ENCODE measurements at regions of chr10 and their contacts with region 1.

Region 1: DNA sequence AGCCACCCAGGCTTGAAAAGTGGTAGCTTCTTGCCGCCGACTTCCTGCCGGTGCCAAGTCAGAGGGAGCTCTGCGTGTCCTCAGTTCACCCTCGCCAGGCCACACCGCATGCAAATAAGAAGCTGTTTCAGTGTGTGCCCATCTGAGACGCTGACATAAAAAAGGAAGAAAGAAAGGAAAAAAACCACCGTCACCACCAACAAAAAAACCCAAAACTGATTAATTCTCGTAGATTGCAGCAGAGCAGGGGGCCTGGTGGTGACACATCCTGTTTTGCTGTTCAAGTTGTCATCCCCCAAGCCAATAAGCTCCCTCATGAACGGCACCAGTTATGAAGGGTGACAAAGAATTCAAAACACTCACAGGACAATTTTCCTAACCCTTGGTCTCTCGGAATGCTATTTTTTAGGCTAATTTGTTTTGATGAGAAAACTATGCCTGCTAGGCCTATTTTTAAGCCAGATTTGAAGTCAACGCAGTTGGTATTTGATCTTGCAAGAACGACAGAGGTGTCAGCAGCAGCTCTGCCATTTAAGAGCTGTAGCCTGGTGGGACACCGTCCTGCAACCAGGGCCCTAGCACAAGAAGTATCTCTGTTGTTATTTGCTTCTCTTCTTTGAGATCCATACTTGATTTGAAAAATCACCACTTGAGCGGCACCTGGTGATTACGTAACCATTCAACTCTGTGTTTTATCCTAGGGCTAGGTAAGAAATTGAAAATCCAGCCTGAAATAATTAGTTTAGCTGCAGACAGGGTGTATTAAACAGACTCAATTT is 145.6 kb downstream of the PFKFB3 start:
- DNase-seq: peak; percentile 41 to 96 (median 93)
- ATAC-seq: peak; percentile 95
- H3K4me3 ChIP-seq: peak overlapping the region; percentile 54
- H3K4me3 Mint-ChIP-seq: peak overlapping the region; percentile 78 to 88 (median 82)
- H3K27ac ChIP-seq: peak overlapping the region; percentile 79
- H3K27ac Mint-ChIP-seq: peak overlapping the region; percentile 91 to 99 (median 96)
- H3K4me1 ChIP-seq: peaks cover 25 to 34% of the 10 kb centered on the region in 2 donors
- H3K4me1 Mint-ChIP-seq: peaks cover 40 to 77% (median 57%) of the 10 kb centered on the region in 7 donors
- H3K27me3 ChIP-seq: no peaks in the 10 kb centered on the region
- H3K27me3 Mint-ChIP-seq: no peaks in the 10 kb centered on the region

Region 2: GRCh38 chr10:6074489-6075301 is 273.6 kb before region 1 on chr10:
- CTCF ChIA-PET with region 1: no interaction called
- POLR2A ChIA-PET with region 1: no interaction called
- intact Hi-C with region 1: no loop called
- DNase-seq: no peak
- ATAC-seq: no peak
- H3K4me3 ChIP-seq: no peak overlapping the region
- H3K4me3 Mint-ChIP-seq: peak overlapping the region in 1 of 10 donors; percentile 36
- H3K27ac ChIP-seq: no peak overlapping the region
- H3K27ac Mint-ChIP-seq: peak overlapping the region in 3 of 9 donors; percentile 5 to 63 (median 22)
- H3K4me1 ChIP-seq: peaks cover 0 to 32% of the 10 kb centered on the region in 2 donors
- H3K4me1 Mint-ChIP-seq: peaks cover 30 to 61% (median 49%) of the 10 kb centered on the region in 7 donors
- H3K27me3 ChIP-seq: no peaks in the 10 kb centered on the region
- H3K27me3 Mint-ChIP-seq: no peaks in the 10 kb centered on the region

Region 3: GRCh38 chr10:6108603-6109443 is 239.5 kb before region 1 on chr10:
- CTCF ChIA-PET with region 1: interaction called, 3 read pairs
- POLR2A ChIA-PET with region 1: no interaction called
- intact Hi-C with region 1: loop called in 1 of 2 experiments (anchors 1 kb)
- DNase-seq: peak in 7 of 9 donors; percentile 38 to 66 (median 62)
- ATAC-seq: peak; percentile 85
- H3K4me3 ChIP-seq: no peak overlapping the region
- H3K4me3 Mint-ChIP-seq: peak overlapping the region in 3 of 10 donors; percentile 2 to 37 (median 29)
- H3K27ac ChIP-seq: no peak overlapping the region
- H3K27ac Mint-ChIP-seq: peak overlapping the region; percentile 37 to 91 (median 80)
- H3K4me1 ChIP-seq: peaks cover 10 to 11% of the 10 kb centered on the region in 2 donors
- H3K4me1 Mint-ChIP-seq: peaks cover 11 to 38% (median 23%) of the 10 kb centered on the region in 7 donors
- H3K27me3 ChIP-seq: no peaks in the 10 kb centered on the region
- H3K27me3 Mint-ChIP-seq: no peaks in the 10 kb centered on the region

Region 4: GRCh38 chr10:6171881-6172695 is 176.2 kb before region 1 on chr10:
- CTCF ChIA-PET with region 1: interaction called, 3 read pairs
- POLR2A ChIA-PET with region 1: interaction called, 5 read pairs
- intact Hi-C with region 1: loop called in 1 of 2 experiments (anchors 1 kb)
- DNase-seq: peak in 1 of 9 donors; percentile 54
- ATAC-seq: peak; percentile 75
- H3K4me3 ChIP-seq: no peak overlapping the region
- H3K4me3 Mint-ChIP-seq: peak overlapping the region in 9 of 10 donors; percentile 21 to 74 (median 43)
- H3K27ac ChIP-seq: peak overlapping the region; percentile 3
- H3K27ac Mint-ChIP-seq: peak overlapping the region; percentile 65 to 94 (median 89)
- H3K4me1 ChIP-seq: peaks cover 9 to 46% of the 10 kb centered on the region in 2 donors
- H3K4me1 Mint-ChIP-seq: peaks cover 67 to 94% (median 88%) of the 10 kb centered on the region in 7 donors
- H3K27me3 ChIP-seq: no peaks in the 10 kb centered on the region
- H3K27me3 Mint-ChIP-seq: no peaks in the 10 kb centered on the region

Region 5: GRCh38 chr10:6300106-6300783 is 48.0 kb before region 1 on chr10:
- CTCF ChIA-PET with region 1: interaction called, 3 read pairs
- POLR2A ChIA-PET with region 1: interaction called, 11 read pairs
- intact Hi-C with region 1: no loop called
- DNase-seq: peak in 7 of 9 donors; percentile 35 to 63 (median 51)
- ATAC-seq: peak; percentile 87
- H3K4me3 ChIP-seq: peak overlapping the region; percentile 15
- H3K4me3 Mint-ChIP-seq: peak overlapping the region; percentile 30 to 78 (median 60)
- H3K27ac ChIP-seq: no peak overlapping the region
- H3K27ac Mint-ChIP-seq: peak overlapping the region; percentile 58 to 95 (median 82)
- H3K4me1 ChIP-seq: peaks cover 7 to 12% of the 10 kb centered on the region in 2 donors
- H3K4me1 Mint-ChIP-seq: peaks cover 7 to 54% (median 27%) of the 10 kb centered on the region in 7 donors
- H3K27me3 ChIP-seq: no peaks in the 10 kb centered on the region
- H3K27me3 Mint-ChIP-seq: no peaks in the 10 kb centered on the region

Region 6: DNA sequence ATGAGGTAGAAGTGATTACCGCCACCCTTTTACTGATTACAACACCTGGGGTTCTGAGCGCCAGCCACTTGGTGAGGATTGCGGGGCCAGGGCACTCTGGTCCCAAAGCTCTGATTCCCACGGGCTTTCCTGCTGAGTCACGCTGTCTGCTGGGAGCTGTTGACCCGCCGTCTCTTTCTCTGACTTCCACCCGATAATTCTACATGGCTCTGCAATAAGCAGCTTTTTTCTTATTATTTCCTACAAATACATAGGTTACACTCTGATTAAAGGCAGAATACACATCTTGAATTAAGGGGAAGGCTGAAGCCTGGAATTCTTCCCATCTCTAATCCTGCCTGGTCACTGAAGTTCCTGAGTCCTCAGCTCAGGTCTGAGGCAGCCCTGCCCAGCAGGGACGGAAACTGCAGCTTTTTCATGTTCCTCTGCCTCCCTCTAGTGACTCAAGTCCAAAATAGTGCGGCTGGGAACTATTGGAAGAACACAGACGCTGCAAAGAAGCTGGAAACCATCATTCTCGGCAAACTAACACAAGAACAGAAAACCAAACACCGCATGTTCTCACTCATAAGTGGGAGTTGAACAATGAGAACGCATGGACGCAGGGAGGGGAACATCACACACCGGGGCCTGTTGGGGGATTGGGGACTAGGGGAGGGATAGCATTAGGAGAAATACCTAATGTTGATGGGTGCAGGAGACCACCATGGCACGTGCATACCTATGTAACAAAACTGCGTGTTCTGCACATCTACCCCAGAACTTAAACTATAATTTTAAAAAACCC is 53.5 kb after region 1 on chr10:
- CTCF ChIA-PET with region 1: interaction called, 35 read pairs
- POLR2A ChIA-PET with region 1: interaction called, 30 read pairs
- intact Hi-C with region 1: loop called (anchors 1 to 2 kb)
- DNase-seq: peak in 8 of 9 donors; percentile 49 to 74 (median 66)
- ATAC-seq: peak; percentile 87
- H3K4me3 ChIP-seq: no peak overlapping the region
- H3K4me3 Mint-ChIP-seq: peak overlapping the region in 9 of 10 donors; percentile 0 to 49 (median 38)
- H3K27ac ChIP-seq: no peak overlapping the region
- H3K27ac Mint-ChIP-seq: peak overlapping the region in 8 of 9 donors; percentile 4 to 82 (median 56)
- H3K4me1 ChIP-seq: peaks cover 0 to 11% of the 10 kb centered on the region in 2 donors
- H3K4me1 Mint-ChIP-seq: peaks cover 4 to 33% (median 18%) of the 10 kb centered on the region in 7 donors
- H3K27me3 ChIP-seq: no peaks in the 10 kb centered on the region
- H3K27me3 Mint-ChIP-seq: peaks cover 0 to 13% (median 0%) of the 10 kb centered on the region in 5 donors

Region 7: GRCh38 chr10:6593241-6593671 is 245.0 kb after region 1 on chr10:
- CTCF ChIA-PET with region 1: no interaction called
- POLR2A ChIA-PET with region 1: no interaction called
- intact Hi-C with region 1: loop called in 1 of 2 experiments (anchors 10 kb)
- DNase-seq: peak in 5 of 9 donors; percentile 29 to 76 (median 61)
- ATAC-seq: peak; percentile 73
- H3K4me3 ChIP-seq: peak overlapping the region; percentile 38
- H3K4me3 Mint-ChIP-seq: peak overlapping the region; percentile 53 to 97 (median 80)
- H3K27ac ChIP-seq: peak overlapping the region; percentile 94
- H3K27ac Mint-ChIP-seq: peak overlapping the region; percentile 96 to 99 (median 97)
- H3K4me1 ChIP-seq: peaks cover 34 to 95% of the 10 kb centered on the region in 2 donors
- H3K4me1 Mint-ChIP-seq: peaks cover 45 to 100% (median 98%) of the 10 kb centered on the region in 7 donors
- H3K27me3 ChIP-seq: no peaks in the 10 kb centered on the region
- H3K27me3 Mint-ChIP-seq: no peaks in the 10 kb centered on the region

Measured in naive thymus-derived CD4-positive, alpha-beta T cell (primary cell).